Naive thymus-derived CD4-positive, alpha-beta T cell (primary cell): ENCODE measurements at regions of chr18 and their contacts with region 1.

Region 1: DNA sequence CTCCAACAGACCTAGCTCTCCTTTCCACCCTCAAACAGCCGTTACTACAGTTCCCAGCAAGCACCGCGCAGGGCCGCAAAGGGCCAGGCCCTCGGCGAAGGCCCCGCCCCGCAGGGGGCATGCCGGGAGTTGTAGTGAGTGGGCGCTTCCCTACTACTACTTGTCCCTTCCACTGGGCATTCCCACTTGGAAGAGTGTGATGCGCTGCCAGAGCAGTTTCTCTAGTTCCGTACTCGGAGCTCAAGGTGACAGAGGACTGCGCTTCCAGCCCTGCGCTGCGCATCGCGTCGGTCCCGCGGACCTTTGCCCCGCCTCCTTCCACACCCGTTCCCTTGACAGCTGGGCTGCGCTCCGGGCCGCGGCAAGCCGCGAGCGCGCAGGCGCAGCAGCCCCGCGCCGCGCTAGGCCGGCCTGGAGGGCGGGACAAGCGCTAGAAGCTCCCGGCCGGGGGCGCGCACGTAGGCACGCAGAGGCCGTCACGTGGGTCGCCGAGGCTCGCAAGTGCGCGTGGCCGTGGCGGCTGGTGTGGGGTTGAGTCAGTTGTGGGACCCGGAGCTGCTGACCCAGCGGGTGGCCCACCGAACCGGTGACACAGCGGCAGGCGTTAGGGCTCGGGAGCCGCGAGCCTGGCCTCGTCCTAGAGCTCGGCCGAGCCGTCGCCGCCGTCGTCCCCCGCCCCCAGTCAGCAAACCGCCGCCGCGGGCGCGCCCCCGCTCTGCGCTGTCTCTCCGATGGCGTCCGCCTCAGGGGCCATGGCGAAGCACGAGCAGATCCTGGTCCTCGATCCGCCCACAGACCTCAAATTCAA is at the start of gene VAPA:
- DNase-seq: peak; percentile 92 to 98 (median 95)
- ATAC-seq: peak; percentile 90
- H3K4me3 ChIP-seq: peak within 1 kb of the TSS; percentile 99
- H3K4me3 Mint-ChIP-seq: peak within 1 kb of the TSS; percentile 89 to 96 (median 93)
- H3K27ac ChIP-seq: peak within 1 kb of the TSS; percentile 98
- H3K27ac Mint-ChIP-seq: peak within 1 kb of the TSS; percentile 85 to 98 (median 96)
- H3K4me1 ChIP-seq: peaks cover 34% of the 10 kb centered on the region in 2 donors
- H3K4me1 Mint-ChIP-seq: peaks cover 18 to 33% (median 28%) of the 10 kb centered on the region in 7 donors
- H3K27me3 ChIP-seq: no peaks in the 10 kb centered on the region
- H3K27me3 Mint-ChIP-seq: peaks cover 0 to 19% (median 0%) of the 10 kb centered on the region in 5 donors
- total RNA-seq, gene VAPA: 109 to 199 (median 151) TPM

Region 2: DNA sequence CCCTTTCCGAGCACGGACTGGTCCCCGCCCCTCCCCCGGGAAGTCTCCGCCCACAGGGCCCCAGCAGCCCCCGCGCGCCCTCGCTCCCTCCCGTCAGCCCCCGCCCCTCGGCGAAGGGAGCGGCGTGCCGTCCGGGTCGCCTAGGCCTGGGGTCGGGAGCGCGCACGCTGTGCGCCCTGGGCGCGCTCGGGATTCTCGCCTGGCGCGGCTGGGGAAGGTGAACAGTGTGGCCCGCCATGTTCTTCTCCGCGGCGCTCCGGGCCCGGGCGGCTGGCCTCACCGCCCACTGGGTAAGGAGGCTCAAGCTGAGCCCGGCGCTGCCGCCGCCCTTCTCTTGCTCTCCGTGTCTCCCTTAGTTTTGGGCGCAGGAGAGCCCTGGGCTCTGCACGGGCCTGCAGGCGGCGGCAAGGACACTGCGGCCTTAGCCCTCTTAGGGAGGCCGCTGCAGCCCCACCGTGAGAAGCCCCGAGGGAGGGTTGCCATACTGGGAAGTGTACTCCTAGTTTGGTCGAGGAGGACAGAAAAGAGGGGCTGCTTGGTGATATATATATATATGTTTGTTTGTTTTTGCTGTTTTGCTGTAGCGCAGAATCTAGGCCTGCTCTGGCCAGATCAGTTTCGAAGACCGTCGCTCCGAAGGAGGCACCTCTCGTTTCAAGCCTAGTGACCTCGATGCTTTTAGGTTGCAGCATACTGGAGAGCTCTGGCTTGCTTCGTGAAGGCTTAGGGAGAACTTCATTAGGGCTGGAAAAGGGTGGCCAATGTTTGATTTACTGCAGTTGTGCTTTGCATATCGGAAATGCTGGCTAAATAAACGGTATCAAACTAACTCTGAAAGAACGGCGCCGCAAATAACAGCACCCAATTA is 811.0 kb before region 1 on chr18 and contains the start of gene NDUFV2:
- CTCF ChIA-PET with region 1: no interaction called
- POLR2A ChIA-PET with region 1: interaction called, 3 read pairs
- intact Hi-C with region 1: loop called (anchors 1 kb)
- DNase-seq: peak; percentile 93 to 99 (median 97)
- ATAC-seq: peak; percentile 97
- H3K4me3 ChIP-seq: peak within 1 kb of the TSS; percentile 81
- H3K4me3 Mint-ChIP-seq: peak within 1 kb of the TSS; percentile 79 to 98 (median 96)
- H3K27ac ChIP-seq: peak within 1 kb of the TSS; percentile 82
- H3K27ac Mint-ChIP-seq: peak within 1 kb of the TSS; percentile 90 to 98 (median 95)
- H3K4me1 ChIP-seq: peaks cover 40 to 48% of the 10 kb centered on the region in 2 donors
- H3K4me1 Mint-ChIP-seq: peaks cover 46 to 61% (median 57%) of the 10 kb centered on the region in 7 donors
- H3K27me3 ChIP-seq: no peaks in the 10 kb centered on the region
- H3K27me3 Mint-ChIP-seq: no peaks in the 10 kb centered on the region
- total RNA-seq, gene NDUFV2: 127 to 198 (median 171) TPM

Region 3: GRCh38 chr18:9474983-9475642 is 438.6 kb before region 1 on chr18 and contains the start of gene RALBP1:
- CTCF ChIA-PET with region 1: no interaction called
- POLR2A ChIA-PET with region 1: no interaction called
- intact Hi-C with region 1: loop called (anchors 1 kb)
- DNase-seq: peak; percentile 92 to 98 (median 96)
- ATAC-seq: peak; percentile 99
- H3K4me3 ChIP-seq: peak within 1 kb of the TSS; percentile 88
- H3K4me3 Mint-ChIP-seq: peak within 1 kb of the TSS; percentile 84 to 99 (median 97)
- H3K27ac ChIP-seq: peak within 1 kb of the TSS; percentile 81
- H3K27ac Mint-ChIP-seq: peak within 1 kb of the TSS; percentile 82 to 97 (median 94)
- H3K4me1 ChIP-seq: peaks cover 0 to 14% of the 10 kb centered on the region in 2 donors
- H3K4me1 Mint-ChIP-seq: peaks cover 21 to 41% (median 30%) of the 10 kb centered on the region in 7 donors
- H3K27me3 ChIP-seq: no peaks in the 10 kb centered on the region
- H3K27me3 Mint-ChIP-seq: peaks cover 0 to 24% (median 5%) of the 10 kb centered on the region in 5 donors
- total RNA-seq, gene RALBP1: 20.3 to 47.8 (median 42.2) TPM

Region 4: DNA sequence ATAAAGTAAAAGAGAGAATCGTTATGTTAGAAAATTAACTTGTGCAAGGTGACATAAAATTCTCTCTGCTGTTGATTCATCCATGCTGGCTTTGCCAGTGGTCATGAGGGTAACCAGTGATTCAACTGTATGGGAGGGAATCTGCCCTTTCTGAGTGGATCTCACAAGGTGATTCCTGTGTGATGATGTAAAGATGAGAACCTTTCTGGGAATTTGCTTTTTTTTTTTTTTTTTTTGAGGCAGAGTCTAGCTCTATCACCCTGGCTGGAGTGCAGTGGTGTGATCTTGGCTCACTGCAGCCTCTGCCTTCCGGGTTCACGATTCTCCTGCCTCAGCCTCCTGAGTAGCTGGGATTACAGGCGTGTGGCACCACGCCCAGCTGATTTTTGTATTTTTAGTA is 182.3 kb before region 1 on chr18:
- CTCF ChIA-PET with region 1: no interaction called
- POLR2A ChIA-PET with region 1: no interaction called
- intact Hi-C with region 1: no loop called
- DNase-seq: no peak
- ATAC-seq: no peak
- H3K4me3 ChIP-seq: no peak overlapping the region
- H3K4me3 Mint-ChIP-seq: no peak overlapping the region
- H3K27ac ChIP-seq: no peak overlapping the region
- H3K27ac Mint-ChIP-seq: no peak overlapping the region
- H3K4me1 ChIP-seq: no peaks in the 10 kb centered on the region
- H3K4me1 Mint-ChIP-seq: peaks cover 0 to 11% (median 4%) of the 10 kb centered on the region in 7 donors
- H3K27me3 ChIP-seq: no peaks in the 10 kb centered on the region
- H3K27me3 Mint-ChIP-seq: peaks cover 15 to 55% (median 22%) of the 10 kb centered on the region in 5 donors

Region 5: GRCh38 chr18:9951022-9951859 is 37.5 kb after region 1 on chr18:
- CTCF ChIA-PET with region 1: no interaction called
- POLR2A ChIA-PET with region 1: interaction called, 6 read pairs
- intact Hi-C with region 1: loop called (anchors 2 kb)
- DNase-seq: peak in 4 of 9 donors; percentile 8 to 30 (median 24)
- ATAC-seq: peak; percentile 76
- H3K4me3 ChIP-seq: no peak overlapping the region
- H3K4me3 Mint-ChIP-seq: no peak overlapping the region
- H3K27ac ChIP-seq: no peak overlapping the region
- H3K27ac Mint-ChIP-seq: peak overlapping the region in 5 of 9 donors; percentile 14 to 79 (median 57)
- H3K4me1 ChIP-seq: no peaks in the 10 kb centered on the region
- H3K4me1 Mint-ChIP-seq: peaks cover 2 to 17% (median 10%) of the 10 kb centered on the region in 7 donors
- H3K27me3 ChIP-seq: no peaks in the 10 kb centered on the region
- H3K27me3 Mint-ChIP-seq: no peaks in the 10 kb centered on the region

Region 6: DNA sequence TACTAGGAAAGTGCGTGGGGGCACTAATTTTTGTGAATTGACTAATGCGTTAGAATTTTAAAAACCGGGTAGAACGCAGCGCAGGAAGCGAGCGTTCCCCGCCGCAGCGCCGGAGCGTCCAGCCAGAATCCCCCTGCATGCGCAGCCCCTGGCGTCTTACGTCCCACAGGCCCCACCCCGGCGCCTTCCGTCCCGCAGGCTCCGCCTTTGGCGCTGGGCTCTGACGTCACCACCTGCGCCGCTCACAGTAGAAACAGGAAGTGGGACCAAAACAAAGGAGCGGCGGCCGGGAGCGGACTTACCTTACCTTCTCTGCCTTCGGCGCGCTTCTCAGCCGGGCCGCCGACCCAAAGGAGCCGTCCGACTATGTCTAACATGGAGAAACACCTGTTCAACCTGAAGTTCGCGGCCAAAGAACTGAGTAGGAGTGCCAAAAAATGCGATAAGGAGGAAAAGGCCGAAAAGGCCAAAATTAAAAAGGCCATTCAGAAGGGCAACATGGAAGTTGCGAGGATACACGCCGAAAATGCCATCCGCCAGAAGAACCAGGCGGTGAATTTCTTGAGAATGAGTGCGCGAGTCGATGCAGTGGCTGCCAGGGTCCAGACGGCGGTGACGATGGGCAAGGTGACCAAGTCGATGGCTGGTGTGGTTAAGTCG is 1937.5 kb after region 1 on chr18 and contains the start of gene CHMP1B:
- CTCF ChIA-PET with region 1: no interaction called
- POLR2A ChIA-PET with region 1: interaction called, 6 read pairs
- intact Hi-C with region 1: loop called (anchors 1 to 2 kb)
- DNase-seq: peak; percentile 95 to 97 (median 97)
- ATAC-seq: peak; percentile 91
- H3K4me3 ChIP-seq: peak within 1 kb of the TSS; percentile 88
- H3K4me3 Mint-ChIP-seq: peak within 1 kb of the TSS; percentile 89 to 100 (median 100)
- H3K27ac ChIP-seq: peak within 1 kb of the TSS; percentile 96
- H3K27ac Mint-ChIP-seq: peak within 1 kb of the TSS; percentile 97 to 100 (median 100)
- H3K4me1 ChIP-seq: peaks cover 19 to 21% of the 10 kb centered on the region in 2 donors
- H3K4me1 Mint-ChIP-seq: peaks cover 16 to 62% (median 50%) of the 10 kb centered on the region in 7 donors
- H3K27me3 ChIP-seq: no peaks in the 10 kb centered on the region
- H3K27me3 Mint-ChIP-seq: peaks cover 0 to 13% (median 0%) of the 10 kb centered on the region in 5 donors
- total RNA-seq, gene CHMP1B: 27.2 to 115 (median 56.1) TPM